CD4-positive, alpha-beta memory T cell (primary cell): ENCODE measurements at regions of chr16 and their contacts with region 1.

Region 1: DNA sequence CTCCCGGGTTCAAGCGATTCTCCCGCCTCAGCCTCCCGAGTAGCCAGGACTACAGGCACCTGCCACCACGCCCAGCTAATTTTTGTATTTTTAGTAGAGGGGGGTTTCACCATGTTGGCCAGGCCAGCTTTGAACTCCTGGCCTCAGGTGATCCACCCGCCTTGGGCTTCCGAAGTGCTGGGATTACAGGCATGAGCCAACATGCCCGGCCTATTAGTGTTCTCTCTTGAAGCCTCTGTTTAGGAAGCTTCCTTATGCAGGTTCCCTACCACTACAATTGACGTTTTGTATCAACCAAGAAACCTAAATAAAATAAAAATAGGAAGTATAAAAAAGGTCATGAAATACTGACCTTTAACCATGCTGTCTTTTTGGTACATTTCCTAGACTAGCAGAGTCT is 16.0 kb downstream of the CHST5 start:
- DNase-seq: no peak
- H3K4me3 ChIP-seq: no peak overlapping the region
- H3K4me3 Mint-ChIP-seq: no peak overlapping the region
- H3K27ac ChIP-seq: no peak overlapping the region
- H3K27ac Mint-ChIP-seq: no peak overlapping the region
- H3K4me1 ChIP-seq: peaks cover 8% of the 10 kb centered on the region
- H3K4me1 Mint-ChIP-seq: peaks cover 10 to 20% (median 16%) of the 10 kb centered on the region in 4 donors
- H3K27me3 ChIP-seq: no peaks in the 10 kb centered on the region
- H3K27me3 Mint-ChIP-seq: no peaks in the 10 kb centered on the region

Region 2: DNA sequence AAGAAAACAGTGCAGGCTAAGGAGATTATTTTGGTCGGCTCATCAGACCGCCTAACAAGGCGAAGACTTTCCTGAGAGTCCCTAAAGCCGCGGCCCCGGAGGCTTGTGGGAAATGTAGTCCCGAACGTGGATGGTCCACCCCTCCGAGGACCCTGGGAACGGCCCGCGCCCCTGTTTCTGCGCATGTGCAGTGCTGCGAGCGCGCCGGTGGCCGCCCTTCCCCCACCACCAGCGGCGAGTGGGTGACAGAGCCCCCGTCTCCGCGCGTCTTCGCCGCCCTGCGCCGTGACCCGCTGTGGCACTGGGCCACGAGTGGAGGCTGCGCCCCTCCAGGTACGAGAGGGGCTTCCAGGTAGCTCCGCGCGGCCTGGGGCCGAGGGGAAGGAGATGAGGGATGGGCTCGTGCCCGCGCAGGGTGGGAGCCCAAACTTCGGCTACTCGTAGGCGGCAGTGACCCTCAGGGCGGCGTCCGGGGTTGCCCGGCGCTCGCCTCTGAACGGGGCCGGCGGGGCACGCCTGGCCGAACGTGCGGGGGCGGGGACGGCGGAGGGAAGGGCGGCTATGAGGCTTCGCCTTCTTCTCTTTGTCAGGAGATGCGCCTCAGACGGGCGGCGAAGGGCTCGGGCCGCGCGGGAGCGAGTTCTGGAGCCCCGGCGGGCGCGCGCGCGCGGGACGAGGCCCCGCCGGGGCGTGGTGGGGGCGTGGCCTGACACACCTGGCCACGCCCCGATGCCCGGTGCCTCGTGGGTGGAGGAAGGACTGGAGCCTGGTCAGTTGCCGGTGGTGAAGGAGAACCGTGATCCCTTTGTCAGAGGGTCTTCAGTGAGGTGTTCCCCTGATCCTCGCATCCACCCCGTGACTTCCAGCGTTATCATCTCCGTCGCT is 371.3 kb before region 1 on chr16 and contains the start of gene ZFP1:
- CTCF ChIA-PET with region 1: no interaction called
- POLR2A ChIA-PET with region 1: no interaction called
- intact Hi-C with region 1: loop called (anchors 2 kb)
- DNase-seq: peak; percentile 92 to 96 (median 93)
- H3K4me3 ChIP-seq: peak within 1 kb of the TSS; percentile 44 to 95
- H3K4me3 Mint-ChIP-seq: peak within 1 kb of the TSS; percentile 82 to 91 (median 88)
- H3K27ac ChIP-seq: peak within 1 kb of the TSS; percentile 75
- H3K27ac Mint-ChIP-seq: peak within 1 kb of the TSS; percentile 75 to 93 (median 91)
- H3K4me1 ChIP-seq: peaks cover 5% of the 10 kb centered on the region
- H3K4me1 Mint-ChIP-seq: peaks cover 8 to 23% (median 13%) of the 10 kb centered on the region in 4 donors
- H3K27me3 ChIP-seq: no peaks in the 10 kb centered on the region
- H3K27me3 Mint-ChIP-seq: no peaks in the 10 kb centered on the region
- total RNA-seq, gene ZFP1: 11.7 to 13.4 TPM

Region 3: DNA sequence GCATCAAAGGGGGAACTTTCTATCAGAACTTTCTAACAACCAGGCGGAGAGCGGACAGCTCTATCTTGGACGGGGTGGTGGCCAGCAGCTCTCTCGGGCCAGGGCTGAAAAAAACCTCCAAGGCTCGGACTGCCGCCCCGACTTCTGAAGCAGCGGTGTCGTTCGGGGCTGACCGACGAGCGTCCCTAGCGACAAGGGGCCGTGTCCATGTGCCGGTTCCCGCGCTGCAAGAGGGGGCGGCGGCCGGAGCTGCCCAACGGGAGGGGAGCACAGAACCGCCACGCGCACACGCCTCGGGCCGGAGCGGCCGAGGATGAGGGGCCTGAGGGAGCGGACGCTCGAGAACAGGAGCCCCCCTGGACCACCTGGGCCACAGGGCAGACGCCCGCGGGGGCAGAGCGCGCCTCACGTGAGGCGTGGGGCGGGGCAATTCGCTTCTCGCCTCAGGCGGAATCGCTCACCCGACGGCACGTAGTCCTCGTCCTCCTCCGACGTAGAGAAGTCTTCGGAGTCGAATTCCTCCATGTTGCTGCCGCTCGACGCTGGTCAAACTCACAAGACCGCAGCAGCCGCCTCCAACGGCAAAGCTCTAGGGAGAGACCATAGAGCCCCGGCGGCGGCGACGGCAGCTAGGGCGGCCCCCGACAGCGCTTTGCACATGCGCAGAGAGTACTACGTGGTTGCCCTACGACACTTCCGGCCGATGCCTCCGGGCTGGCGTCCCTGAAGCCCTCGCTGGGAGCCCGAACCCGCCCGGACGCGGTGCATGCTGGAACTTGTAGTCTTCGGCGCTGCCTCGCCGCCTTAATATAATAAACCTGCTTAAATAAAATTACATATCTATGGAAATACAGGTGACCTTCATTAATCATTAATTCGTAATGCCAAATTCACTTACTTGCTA is 86.8 kb before region 1 on chr16 and contains the start of gene CFDP1:
- CTCF ChIA-PET with region 1: interaction called, 3 read pairs
- POLR2A ChIA-PET with region 1: interaction called, 18 read pairs
- intact Hi-C with region 1: loop called (anchors 1 kb)
- DNase-seq: peak; percentile 96 to 98 (median 97)
- H3K4me3 ChIP-seq: peak within 1 kb of the TSS; percentile 61 to 90
- H3K4me3 Mint-ChIP-seq: peak within 1 kb of the TSS; percentile 89 to 95 (median 94)
- H3K27ac ChIP-seq: peak within 1 kb of the TSS; percentile 96
- H3K27ac Mint-ChIP-seq: peak within 1 kb of the TSS; percentile 92 to 98 (median 97)
- H3K4me1 ChIP-seq: peaks cover 30% of the 10 kb centered on the region
- H3K4me1 Mint-ChIP-seq: peaks cover 16 to 56% (median 43%) of the 10 kb centered on the region in 4 donors
- H3K27me3 ChIP-seq: no peaks in the 10 kb centered on the region
- H3K27me3 Mint-ChIP-seq: no peaks in the 10 kb centered on the region
- total RNA-seq, gene CFDP1: 41.8 to 42.4 TPM

Region 4: GRCh38 chr16:75506567-75506966 is 13.3 kb before region 1 on chr16:
- CTCF ChIA-PET with region 1: interaction called, 14 read pairs
- POLR2A ChIA-PET with region 1: no interaction called
- intact Hi-C with region 1: no loop called
- DNase-seq: no peak
- H3K4me3 ChIP-seq: no peak overlapping the region
- H3K4me3 Mint-ChIP-seq: no peak overlapping the region
- H3K27ac ChIP-seq: no peak overlapping the region
- H3K27ac Mint-ChIP-seq: no peak overlapping the region
- H3K4me1 ChIP-seq: no peaks in the 10 kb centered on the region
- H3K4me1 Mint-ChIP-seq: no peaks in the 10 kb centered on the region
- H3K27me3 ChIP-seq: no peaks in the 10 kb centered on the region
- H3K27me3 Mint-ChIP-seq: peaks cover 10 to 17% of the 10 kb centered on the region in 2 donors

Region 5: DNA sequence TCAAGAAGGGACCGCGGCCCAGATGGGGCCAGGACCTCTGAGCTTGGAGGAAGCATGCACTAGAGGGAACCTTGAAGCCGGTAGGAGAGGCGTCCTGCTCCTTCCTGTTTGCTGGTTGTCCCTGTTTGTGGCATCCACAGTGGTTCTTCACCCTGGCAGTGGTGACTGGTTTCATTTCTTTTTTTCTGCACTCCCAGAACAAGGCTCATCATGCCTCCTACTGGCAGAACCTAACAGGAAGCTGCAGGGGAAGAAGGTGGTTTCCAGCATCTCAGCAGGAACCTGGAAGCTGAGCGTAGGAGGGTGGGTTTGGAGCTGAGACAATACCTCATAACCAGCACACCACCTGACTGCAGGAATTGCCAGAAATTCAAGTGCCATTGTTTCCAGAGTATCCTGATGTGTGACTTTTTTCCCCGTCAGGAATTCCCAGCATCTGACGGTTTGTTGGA is 30.4 kb after region 1 on chr16:
- CTCF ChIA-PET with region 1: interaction called, 19 read pairs
- POLR2A ChIA-PET with region 1: interaction called, 12 read pairs
- intact Hi-C with region 1: no loop called
- DNase-seq: peak in 3 of 5 donors; percentile 6 to 55 (median 36)
- H3K4me3 ChIP-seq: no peak overlapping the region
- H3K4me3 Mint-ChIP-seq: no peak overlapping the region
- H3K27ac ChIP-seq: no peak overlapping the region
- H3K27ac Mint-ChIP-seq: no peak overlapping the region
- H3K4me1 ChIP-seq: peaks cover 8% of the 10 kb centered on the region
- H3K4me1 Mint-ChIP-seq: peaks cover 0 to 9% (median under 1%) of the 10 kb centered on the region in 4 donors
- H3K27me3 ChIP-seq: no peaks in the 10 kb centered on the region
- H3K27me3 Mint-ChIP-seq: no peaks in the 10 kb centered on the region

Region 6: GRCh38 chr16:75566040-75566810 is 46.3 kb after region 1 on chr16 and contains the start of gene GABARAPL2:
- CTCF ChIA-PET with region 1: interaction called, 14 read pairs
- POLR2A ChIA-PET with region 1: interaction called, 13 read pairs
- intact Hi-C with region 1: loop called (anchors 1 kb)
- DNase-seq: peak; percentile 87 to 95 (median 91)
- H3K4me3 ChIP-seq: peak within 1 kb of the TSS; percentile 68 to 100
- H3K4me3 Mint-ChIP-seq: peak within 1 kb of the TSS; percentile 89 to 100 (median 97)
- H3K27ac ChIP-seq: peak within 1 kb of the TSS; percentile 82
- H3K27ac Mint-ChIP-seq: peak within 1 kb of the TSS; percentile 84 to 100 (median 97)
- H3K4me1 ChIP-seq: peaks cover 48% of the 10 kb centered on the region
- H3K4me1 Mint-ChIP-seq: peaks cover 26 to 57% (median 38%) of the 10 kb centered on the region in 4 donors
- H3K27me3 ChIP-seq: no peaks in the 10 kb centered on the region
- H3K27me3 Mint-ChIP-seq: peaks cover 0 to 7% of the 10 kb centered on the region in 2 donors
- total RNA-seq, gene GABARAPL2: 91.9 to 100 TPM

Region 7: GRCh38 chr16:75764154-75764768 is 244.4 kb after region 1 on chr16:
- CTCF ChIA-PET with region 1: interaction called, 7 read pairs
- POLR2A ChIA-PET with region 1: no interaction called
- intact Hi-C with region 1: loop called (anchors 1 kb)
- DNase-seq: peak; percentile 57 to 69 (median 67)
- H3K4me3 ChIP-seq: no peak overlapping the region
- H3K4me3 Mint-ChIP-seq: no peak overlapping the region
- H3K27ac ChIP-seq: no peak overlapping the region
- H3K27ac Mint-ChIP-seq: peak overlapping the region in 1 of 7 donors; percentile 3
- H3K4me1 ChIP-seq: no peaks in the 10 kb centered on the region
- H3K4me1 Mint-ChIP-seq: peaks cover 4 to 8% (median 6%) of the 10 kb centered on the region in 4 donors
- H3K27me3 ChIP-seq: no peaks in the 10 kb centered on the region
- H3K27me3 Mint-ChIP-seq: peaks cover 0 to 2% of the 10 kb centered on the region in 2 donors